ENCODE measurements at regions of chr7 and their contacts with region 1.

Region 1: DNA sequence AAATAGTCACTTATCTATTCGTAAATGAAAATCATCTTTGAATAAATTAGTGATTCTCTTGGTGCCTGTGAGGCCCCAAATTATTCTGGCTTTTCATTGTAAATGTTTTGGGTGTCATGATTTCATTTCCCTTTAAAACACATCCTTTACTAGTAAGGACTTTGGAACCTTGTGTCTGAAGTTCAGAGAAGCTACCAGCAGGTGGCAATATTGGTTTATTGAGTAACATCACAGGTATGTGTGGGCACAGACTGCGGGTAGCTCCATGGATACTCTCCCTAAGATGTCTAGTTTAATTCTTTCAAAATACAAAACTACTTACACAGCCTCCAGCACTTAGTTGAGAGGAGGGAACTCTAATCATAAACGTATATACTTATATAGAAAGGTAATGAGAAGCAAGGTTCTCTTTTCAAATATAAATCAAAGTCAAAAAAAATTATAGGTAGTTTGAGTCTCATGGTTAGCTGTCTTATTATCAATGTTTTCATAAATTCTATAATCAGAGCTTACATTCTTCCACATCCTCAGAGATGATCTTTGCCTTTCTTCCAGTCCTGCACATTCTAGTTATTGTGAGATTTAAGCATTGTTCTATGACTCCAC is 449.6 kb downstream of the GRM8 start:
- H3K4me3 ChIP-seq: no peak overlapping the region
- H3K27ac ChIP-seq: no peak overlapping the region
- H3K4me1 ChIP-seq: no peaks in the 10 kb centered on the region
- CTCF ChIP-seq: peak; percentile 14; the same call in 1 of the 2 replicates

Region 2: DNA sequence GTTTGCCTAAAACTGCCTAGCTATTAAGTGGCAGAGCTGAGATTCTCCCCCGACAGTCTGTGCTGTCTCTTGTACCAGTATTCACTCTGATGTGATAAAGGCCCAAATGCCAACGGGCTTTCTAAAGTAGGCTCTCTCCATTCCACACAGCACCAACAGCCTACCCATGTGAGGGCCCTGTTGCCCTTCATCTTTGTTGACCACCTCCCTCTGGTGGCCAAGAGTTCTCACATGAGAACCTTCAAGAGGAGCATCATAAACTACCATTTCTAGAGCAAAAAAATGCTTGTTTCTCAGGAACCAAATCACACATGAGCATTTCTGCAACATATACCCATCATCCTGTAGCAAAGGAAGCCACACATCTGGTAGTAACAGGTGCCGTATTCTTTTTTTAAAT is 263.8 kb after region 1 on chr7:
- CTCF ChIA-PET with region 1: interaction called, 13 read pairs
- POLR2A ChIA-PET with region 1: no interaction called
- H3K4me3 ChIP-seq: no peak overlapping the region
- H3K27ac ChIP-seq: no peak overlapping the region
- H3K4me1 ChIP-seq: no peaks in the 10 kb centered on the region
- CTCF ChIP-seq: no peak

Region 3: GRCh38 chr7:127177156-127177555 is 374.0 kb after region 1 on chr7:
- CTCF ChIA-PET with region 1: no interaction called
- POLR2A ChIA-PET with region 1: no interaction called
- H3K4me3 ChIP-seq: no peak overlapping the region
- H3K27ac ChIP-seq: no peak overlapping the region
- H3K4me1 ChIP-seq: no peaks in the 10 kb centered on the region
- CTCF ChIP-seq: no peak

Region 4: GRCh38 chr7:127514499-127514898 is 711.3 kb after region 1 on chr7:
- CTCF ChIA-PET with region 1: interaction called, 11 read pairs
- POLR2A ChIA-PET with region 1: no interaction called
- H3K4me3 ChIP-seq: no peak overlapping the region
- H3K27ac ChIP-seq: no peak overlapping the region
- H3K4me1 ChIP-seq: no peaks in the 10 kb centered on the region
- CTCF ChIP-seq: peak; percentile 61

Measured in HEK293 (cell line).